Activated B cell treated with CpG ODN at 0.5 μM for 24 hours (primary cell): ENCODE measurements at regions of chr5 and their contacts with region 1.

Region 1: DNA sequence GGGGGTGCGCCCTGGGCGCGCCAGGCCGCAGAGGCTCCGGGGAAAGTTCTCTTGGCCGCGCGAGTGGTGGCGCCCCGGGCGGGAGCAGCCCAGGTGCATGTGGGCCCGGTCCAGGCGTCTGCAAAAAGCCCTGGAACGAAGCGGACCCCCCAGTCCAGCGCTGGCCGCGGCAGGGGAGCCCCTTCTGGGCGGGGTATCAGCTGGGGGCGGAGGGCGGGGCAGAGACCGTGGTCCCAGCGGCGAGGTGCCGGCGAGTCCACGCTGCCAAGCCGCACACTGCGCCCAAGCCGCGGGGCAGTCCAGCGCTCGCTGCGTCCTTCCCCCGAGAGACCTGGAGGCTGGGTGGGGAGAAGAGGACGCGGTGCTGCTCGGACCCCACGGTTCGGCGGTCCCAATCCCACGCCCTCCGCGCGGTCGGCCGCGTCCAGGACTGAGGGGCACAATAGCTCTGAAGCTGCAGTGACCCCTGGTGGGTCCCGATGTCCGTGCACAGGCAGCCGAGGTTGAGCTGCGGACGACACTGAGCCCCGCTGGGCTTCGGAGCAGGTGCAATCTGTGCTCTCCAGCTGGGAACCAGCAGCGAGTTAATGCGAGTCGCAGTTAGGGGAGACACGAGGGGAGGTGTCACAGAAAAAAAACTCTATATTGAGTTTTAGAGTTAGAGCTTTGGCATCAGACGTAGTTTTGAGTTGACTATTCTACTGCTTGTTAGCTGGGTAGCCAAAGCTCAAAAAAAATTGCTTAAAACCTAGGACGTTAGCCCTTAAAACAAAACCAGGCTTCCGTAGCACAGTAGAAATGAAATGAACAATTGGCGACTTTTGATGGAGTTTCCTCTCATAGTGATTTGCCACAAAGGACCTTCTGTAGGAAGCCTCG is 1.1 kb upstream of the EPB41L4A start:
- DNase-seq: peak; percentile 68
- ATAC-seq: peak; percentile 84
- H3K4me3 Mint-ChIP-seq: peak overlapping the region; percentile 86
- H3K27ac Mint-ChIP-seq: no peak overlapping the region
- H3K4me1 Mint-ChIP-seq: peaks cover 11% of the 10 kb centered on the region
- H3K27me3 Mint-ChIP-seq: peaks cover 14% of the 10 kb centered on the region
- CTCF ChIP-seq: no peak

Region 2: GRCh38 chr5:112210430-112211005 is 209.7 kb before region 1 on chr5:
- CTCF ChIA-PET with region 1: interaction called, 13 read pairs
- POLR2A ChIA-PET with region 1: no interaction called
- intact Hi-C with region 1: loop called (anchors 1 kb)
- DNase-seq: no peak
- ATAC-seq: peak; percentile 25
- H3K4me3 Mint-ChIP-seq: no peak overlapping the region
- H3K27ac Mint-ChIP-seq: no peak overlapping the region
- H3K4me1 Mint-ChIP-seq: peaks cover 4% of the 10 kb centered on the region
- H3K27me3 Mint-ChIP-seq: peaks cover 13% of the 10 kb centered on the region
- CTCF ChIP-seq: no peak

Region 3: DNA sequence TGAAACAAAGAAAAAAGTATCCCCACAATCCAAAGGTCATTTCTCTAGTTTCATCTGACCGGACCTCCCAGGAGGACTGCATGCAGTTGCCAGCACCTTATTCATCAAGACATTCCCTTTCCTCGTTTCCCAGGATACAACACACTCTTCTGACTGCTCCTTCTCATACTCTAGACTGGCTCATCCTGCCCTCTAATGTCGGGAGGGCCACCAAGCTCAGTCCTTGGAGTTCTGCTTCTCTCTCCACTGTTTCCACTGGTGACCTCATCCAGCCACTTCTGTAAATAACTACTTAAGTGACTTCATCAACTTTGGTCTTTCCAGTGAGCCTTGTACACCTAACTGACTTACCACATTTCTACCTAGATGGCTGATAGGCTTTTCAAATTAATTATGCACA is 180.2 kb before region 1 on chr5:
- CTCF ChIA-PET with region 1: interaction called, 13 read pairs
- POLR2A ChIA-PET with region 1: no interaction called
- intact Hi-C with region 1: loop called (anchors 1 kb)
- DNase-seq: no peak
- ATAC-seq: no peak
- H3K4me3 Mint-ChIP-seq: no peak overlapping the region
- H3K27ac Mint-ChIP-seq: no peak overlapping the region
- H3K4me1 Mint-ChIP-seq: no peaks in the 10 kb centered on the region
- H3K27me3 Mint-ChIP-seq: peaks cover 2% of the 10 kb centered on the region
- CTCF ChIP-seq: no peak

Region 4: GRCh38 chr5:112434641-112435040 is 14.4 kb after region 1 on chr5:
- CTCF ChIA-PET with region 1: interaction called, 10 read pairs
- POLR2A ChIA-PET with region 1: no interaction called
- intact Hi-C with region 1: no loop called
- DNase-seq: no peak
- ATAC-seq: no peak
- H3K4me3 Mint-ChIP-seq: no peak overlapping the region
- H3K27ac Mint-ChIP-seq: no peak overlapping the region
- H3K4me1 Mint-ChIP-seq: peaks cover 12% of the 10 kb centered on the region
- H3K27me3 Mint-ChIP-seq: peaks cover 19% of the 10 kb centered on the region
- CTCF ChIP-seq: no peak

Region 5: DNA sequence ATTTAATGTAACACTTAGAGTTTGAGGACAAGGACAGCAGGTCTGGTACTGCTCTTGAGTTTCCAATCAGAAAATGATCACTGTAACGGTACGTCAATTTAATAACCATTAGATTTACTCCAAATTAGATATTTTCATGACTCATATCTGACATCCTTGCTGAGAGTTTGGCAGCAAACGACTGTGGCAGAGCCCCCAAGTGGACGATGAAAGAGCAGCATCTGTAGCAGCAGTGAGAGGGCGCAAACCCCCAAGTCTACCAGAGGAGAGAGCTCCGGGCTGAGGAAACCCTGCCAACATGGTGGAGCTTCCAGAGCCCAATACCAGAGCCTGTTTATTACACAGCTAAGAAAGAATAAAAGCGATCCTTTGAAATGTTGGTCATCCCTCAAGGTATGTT is 72.1 kb after region 1 on chr5:
- CTCF ChIA-PET with region 1: interaction called, 10 read pairs
- POLR2A ChIA-PET with region 1: no interaction called
- intact Hi-C with region 1: no loop called
- DNase-seq: no peak
- ATAC-seq: peak; percentile 98
- H3K4me3 Mint-ChIP-seq: no peak overlapping the region
- H3K27ac Mint-ChIP-seq: no peak overlapping the region
- H3K4me1 Mint-ChIP-seq: peaks cover 7% of the 10 kb centered on the region
- H3K27me3 Mint-ChIP-seq: no peaks in the 10 kb centered on the region
- CTCF ChIP-seq: no peak

Region 6: GRCh38 chr5:112757468-112758208 is 337.4 kb after region 1 on chr5:
- CTCF ChIA-PET with region 1: interaction called, 20 read pairs
- POLR2A ChIA-PET with region 1: interaction called, 3 read pairs
- intact Hi-C with region 1: loop called (anchors 1 kb)
- DNase-seq: no peak
- ATAC-seq: peak; percentile 81
- H3K4me3 Mint-ChIP-seq: no peak overlapping the region
- H3K27ac Mint-ChIP-seq: peak overlapping the region; percentile 46
- H3K4me1 Mint-ChIP-seq: peaks cover 12% of the 10 kb centered on the region
- H3K27me3 Mint-ChIP-seq: no peaks in the 10 kb centered on the region
- CTCF ChIP-seq: peak; percentile 82